ENCODE measurements at regions of chr5 and their contacts with region 1.

Region 1: GRCh38 chr5:95808686-95809413 is 13.7 kb downstream of the GLRX start:
- DNase-seq: peak; percentile 97
- H3K4me3 ChIP-seq: peak overlapping the region; percentile 53
- H3K27ac ChIP-seq: peak overlapping the region; percentile 80
- H3K4me1 ChIP-seq: peaks cover 34% of the 10 kb centered on the region
- CTCF ChIP-seq: no peak

Region 2: GRCh38 chr5:95822542-95823181 is 13.8 kb after region 1 on chr5 and contains the start of gene GLRX:
- CTCF ChIA-PET with region 1: interaction called, 9 read pairs
- POLR2A ChIA-PET with region 1: interaction called, 150 read pairs
- intact Hi-C with region 1: loop called (anchors 1 kb)
- DNase-seq: peak; percentile 82
- H3K4me3 ChIP-seq: peak within 1 kb of the TSS; percentile 91
- H3K27ac ChIP-seq: peak within 1 kb of the TSS; percentile 87
- H3K4me1 ChIP-seq: peaks cover 57% of the 10 kb centered on the region
- CTCF ChIP-seq: no peak
- total RNA-seq, gene GLRX: 26.7 and 80.5 TPM in 2 replicates